Prostate gland (tissue), 2 donors: ENCODE measurements at regions of chr18 and their contacts with region 1.

Region 1: DNA sequence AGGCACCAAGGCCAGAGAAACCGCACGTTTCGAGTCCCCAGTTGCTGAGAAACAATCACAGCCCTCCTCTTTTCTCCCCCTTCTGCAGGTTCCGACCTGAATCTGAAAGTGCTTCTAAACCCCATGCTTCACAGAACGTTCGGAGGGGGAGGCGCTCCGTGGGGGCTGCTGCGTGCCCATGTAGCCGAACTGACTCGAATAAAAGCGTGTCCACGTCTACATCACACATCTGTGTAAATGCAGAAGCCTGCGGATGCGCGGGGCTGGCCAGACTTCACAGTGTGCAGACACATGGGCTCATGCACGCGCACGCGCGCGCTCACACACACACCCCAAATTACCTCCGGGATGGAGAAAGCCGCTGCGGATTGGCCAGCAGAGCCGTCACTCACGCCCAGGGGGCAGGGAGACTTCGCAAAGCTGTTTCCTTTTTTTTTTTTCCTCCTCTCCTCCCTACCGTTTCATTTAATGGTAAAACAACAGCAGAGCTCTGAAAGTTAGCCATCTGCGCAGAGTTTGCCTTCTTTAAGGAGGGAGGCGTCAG is 2.3 kb downstream of the ZNF516 start:
- DNase-seq: peak; percentile 99
- H3K4me3 ChIP-seq: peak overlapping the region; percentile 69 to 86
- H3K27ac ChIP-seq: peak overlapping the region; percentile 84 to 91
- H3K4me1 ChIP-seq: no peaks in the 10 kb centered on the region
- H3K27me3 ChIP-seq: no peaks in the 10 kb centered on the region
- CTCF ChIP-seq: no peak
- POLR2A ChIP-seq: peak; percentile 55

Region 2: DNA sequence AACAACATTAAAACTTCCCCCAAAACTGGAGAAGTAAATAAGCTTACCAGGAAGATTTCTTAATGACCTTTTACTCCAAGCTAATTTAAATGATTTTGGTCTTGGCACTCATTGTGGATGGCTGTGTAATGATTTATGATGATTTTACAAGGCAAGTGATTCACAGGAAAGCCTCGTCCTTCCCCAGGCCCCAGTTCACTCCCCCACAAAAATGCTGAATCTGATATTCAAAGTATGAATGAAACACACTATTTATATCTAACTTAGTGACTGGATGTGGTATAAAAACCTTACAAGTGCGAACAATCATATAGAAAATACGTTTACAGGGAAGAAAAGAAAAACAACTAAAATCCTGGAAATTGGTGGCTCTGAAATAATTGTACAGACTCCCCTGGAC is 47.5 kb before region 1 on chr18:
- intact Hi-C with region 1: loop called (anchors 5 kb)
- DNase-seq: no peak
- H3K4me3 ChIP-seq: no peak overlapping the region
- H3K27ac ChIP-seq: peak overlapping the region in 1 of 2 donors; percentile 84
- H3K4me1 ChIP-seq: peaks cover 5% of the 10 kb centered on the region
- H3K27me3 ChIP-seq: no peaks in the 10 kb centered on the region
- CTCF ChIP-seq: no peak
- POLR2A ChIP-seq: no peak

Region 3: GRCh38 chr18:76518123-76518859 is 25.6 kb after region 1 on chr18:
- intact Hi-C with region 1: loop called (anchors 2 kb)
- DNase-seq: no peak
- H3K4me3 ChIP-seq: peak overlapping the region in 1 of 2 donors; percentile 9
- H3K27ac ChIP-seq: peak overlapping the region; percentile 47 to 60
- H3K4me1 ChIP-seq: no peaks in the 10 kb centered on the region
- H3K27me3 ChIP-seq: no peaks in the 10 kb centered on the region
- CTCF ChIP-seq: no peak
- POLR2A ChIP-seq: no peak

Region 4: DNA sequence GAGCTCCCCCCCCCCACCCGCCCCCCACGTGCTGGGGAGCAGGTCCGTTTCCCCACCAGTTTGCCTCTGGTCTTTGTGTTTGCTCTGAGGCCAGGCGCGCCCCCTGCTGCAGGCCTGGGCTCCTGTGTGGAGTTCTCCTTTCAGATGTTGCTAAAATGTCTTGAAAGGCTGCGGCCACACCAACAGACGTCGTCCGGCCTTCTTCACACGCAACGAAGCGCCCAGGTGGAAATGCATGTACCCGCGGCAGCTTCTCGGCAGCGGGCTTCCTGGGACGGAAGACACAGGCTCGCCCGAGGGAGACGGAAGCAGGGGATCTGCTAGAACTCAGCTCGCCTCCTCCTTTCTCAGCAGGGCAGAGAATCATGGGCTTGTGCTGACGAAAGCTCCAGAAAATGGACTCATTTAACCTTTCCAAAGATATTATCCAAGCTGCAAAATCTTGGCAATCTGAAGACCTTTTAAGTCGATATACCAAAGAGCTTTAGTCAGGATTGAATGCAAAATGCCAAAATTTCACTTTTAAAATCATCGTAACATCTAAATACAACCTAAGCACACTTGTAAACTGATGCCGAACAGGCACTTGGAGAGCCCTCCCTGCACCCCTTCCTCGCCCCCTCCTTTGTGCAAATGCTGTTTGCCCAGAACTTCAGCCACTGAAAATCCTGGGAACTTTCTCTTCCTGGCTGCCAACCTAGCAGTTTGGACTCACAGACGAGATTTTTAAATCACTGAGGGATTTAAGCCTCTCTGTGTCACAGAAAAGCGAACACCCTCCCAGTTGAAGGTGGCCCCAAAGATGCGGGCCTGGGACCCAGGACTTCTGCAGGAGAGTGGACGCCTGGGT is 127.8 kb after region 1 on chr18:
- intact Hi-C with region 1: loop called (anchors 10 kb)
- DNase-seq: peak; percentile 42
- H3K4me3 ChIP-seq: peak overlapping the region; percentile 6 to 19
- H3K27ac ChIP-seq: peak overlapping the region; percentile 78 to 84
- H3K4me1 ChIP-seq: no peaks in the 10 kb centered on the region
- H3K27me3 ChIP-seq: no peaks in the 10 kb centered on the region
- CTCF ChIP-seq: peak; percentile 21 to 57 (median 48)
- POLR2A ChIP-seq: no peak

Region 5: GRCh38 chr18:76686737-76687262 is 194.1 kb after region 1 on chr18:
- intact Hi-C with region 1: loop called (anchors 10 kb)
- DNase-seq: peak; percentile 53
- H3K4me3 ChIP-seq: no peak overlapping the region
- H3K27ac ChIP-seq: peak overlapping the region; percentile 16 to 28
- H3K4me1 ChIP-seq: no peaks in the 10 kb centered on the region
- H3K27me3 ChIP-seq: no peaks in the 10 kb centered on the region
- CTCF ChIP-seq: peak; percentile 25 to 75 (median 67)
- POLR2A ChIP-seq: no peak